PC-3 (cell line): ENCODE measurements at regions of chr1 and their contacts with region 1.

Region 1: GRCh38 chr1:72942008-72942407 is 659.7 kb upstream of the NEGR1 start:
- DNase-seq: no peak
- ATAC-seq: no peak
- H3K4me3 ChIP-seq: no peak overlapping the region
- H3K27ac ChIP-seq: no peak overlapping the region
- H3K4me1 ChIP-seq: peaks cover 45% of the 10 kb centered on the region
- H3K27me3 ChIP-seq: no peaks in the 10 kb centered on the region
- CTCF ChIP-seq: no peak

Region 2: GRCh38 chr1:72601035-72601674 is 340.9 kb before region 1 on chr1:
- CTCF ChIA-PET with region 1: no interaction called
- POLR2A ChIA-PET with region 1: no interaction called
- intact Hi-C with region 1: no loop called
- DNase-seq: no peak
- ATAC-seq: no peak
- H3K4me3 ChIP-seq: no peak overlapping the region
- H3K27ac ChIP-seq: no peak overlapping the region
- H3K4me1 ChIP-seq: peaks cover 5% of the 10 kb centered on the region; the same call in 1 of the 2 replicates
- H3K27me3 ChIP-seq: no peaks in the 10 kb centered on the region
- CTCF ChIP-seq: no peak

Region 3: DNA sequence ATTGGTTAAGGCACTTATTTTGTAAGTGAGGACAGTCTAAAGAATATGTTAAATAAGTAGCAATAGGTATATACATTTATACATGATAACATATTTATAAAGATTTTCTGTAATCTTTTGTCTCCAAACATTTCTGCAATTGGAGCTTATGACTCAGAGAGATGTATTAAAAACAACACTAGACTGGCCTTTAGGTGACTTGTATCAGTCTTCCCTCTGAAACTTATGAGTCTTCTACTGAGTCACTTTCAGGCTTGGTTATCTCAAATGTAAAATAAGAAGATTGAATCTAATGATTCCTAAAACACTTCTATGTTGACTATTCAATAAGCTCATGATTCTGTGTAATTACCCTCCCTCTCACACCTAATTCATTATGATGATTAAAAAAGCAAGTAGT is 12.9 kb after region 1 on chr1:
- CTCF ChIA-PET with region 1: no interaction called
- POLR2A ChIA-PET with region 1: no interaction called
- intact Hi-C with region 1: no loop called
- DNase-seq: peak; percentile 44
- ATAC-seq: peak; percentile 73; the same call in 1 of the 2 replicates
- H3K4me3 ChIP-seq: no peak overlapping the region
- H3K27ac ChIP-seq: no peak overlapping the region
- H3K4me1 ChIP-seq: no peaks in the 10 kb centered on the region
- H3K27me3 ChIP-seq: no peaks in the 10 kb centered on the region
- CTCF ChIP-seq: no peak

Region 4: GRCh38 chr1:72969461-72969860 is 27.5 kb after region 1 on chr1:
- CTCF ChIA-PET with region 1: no interaction called
- POLR2A ChIA-PET with region 1: no interaction called
- intact Hi-C with region 1: loop called (anchors 2 kb)
- DNase-seq: no peak
- ATAC-seq: no peak
- H3K4me3 ChIP-seq: no peak overlapping the region
- H3K27ac ChIP-seq: no peak overlapping the region
- H3K4me1 ChIP-seq: no peaks in the 10 kb centered on the region
- H3K27me3 ChIP-seq: no peaks in the 10 kb centered on the region
- CTCF ChIP-seq: no peak